ENCODE measurements at regions of chr16 and their contacts with region 1.

Region 1: DNA sequence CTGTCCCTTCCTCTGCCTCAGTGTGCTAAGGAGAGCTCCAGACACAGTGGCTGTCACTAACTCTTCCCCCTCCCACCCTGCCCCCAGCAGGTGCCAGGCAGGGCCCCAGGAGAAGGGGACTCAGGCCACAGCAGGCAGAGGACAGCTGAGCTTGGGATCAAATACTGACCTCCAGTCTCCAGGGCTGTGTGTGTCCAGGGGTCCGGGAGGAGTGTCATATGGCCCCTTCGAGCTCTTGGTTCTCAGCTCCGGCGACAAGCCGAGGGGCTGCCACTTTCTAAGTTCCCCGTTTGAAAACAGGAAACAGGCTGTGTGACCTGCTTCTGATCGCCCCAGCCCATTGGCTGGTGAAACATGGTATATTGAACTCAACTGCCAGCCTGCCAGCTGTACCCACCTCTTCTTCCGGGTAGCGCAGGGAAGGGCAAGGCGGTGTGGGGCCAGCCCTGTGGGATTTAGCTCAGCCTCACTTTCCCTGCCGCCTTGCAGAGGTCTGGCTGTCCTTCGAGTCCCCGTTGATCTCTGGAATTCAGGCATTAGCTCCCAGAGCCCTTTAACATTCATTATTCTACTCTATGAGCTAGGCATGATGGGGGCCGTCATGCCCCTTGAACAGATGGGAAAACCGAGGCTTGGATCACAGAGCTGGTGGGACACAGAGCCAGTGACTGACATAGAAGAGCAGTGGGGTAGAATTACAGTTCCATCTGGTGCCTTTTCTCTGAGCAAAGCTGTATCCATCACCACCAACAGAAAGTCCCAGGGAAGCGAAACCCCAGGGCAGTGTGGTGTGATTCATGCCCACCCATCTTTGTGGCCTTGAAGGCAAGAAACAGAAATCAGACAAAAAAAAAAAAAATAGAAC is at the start of gene SNX20:
- DNase-seq: peak in 13 of 14 experiments; percentile 57 to 90 (median 69)
- ATAC-seq: peak; percentile 82
- H3K4me3 ChIP-seq: peak within 1 kb of the TSS; percentile 96
- H3K4me3 Mint-ChIP-seq: peak within 1 kb of the TSS; percentile 97
- H3K27ac ChIP-seq: peak within 1 kb of the TSS; percentile 87 to 92
- H3K27ac Mint-ChIP-seq: peak within 1 kb of the TSS; percentile 84
- H3K4me1 ChIP-seq: peaks cover 91% of the 10 kb centered on the region
- H3K4me1 Mint-ChIP-seq: peaks cover 93% of the 10 kb centered on the region
- H3K27me3 ChIP-seq: no peaks in the 10 kb centered on the region
- H3K27me3 Mint-ChIP-seq: no peaks in the 10 kb centered on the region
- CTCF ChIP-seq: no peak
- total RNA-seq, gene SNX20: 26.6 TPM

Region 2: DNA sequence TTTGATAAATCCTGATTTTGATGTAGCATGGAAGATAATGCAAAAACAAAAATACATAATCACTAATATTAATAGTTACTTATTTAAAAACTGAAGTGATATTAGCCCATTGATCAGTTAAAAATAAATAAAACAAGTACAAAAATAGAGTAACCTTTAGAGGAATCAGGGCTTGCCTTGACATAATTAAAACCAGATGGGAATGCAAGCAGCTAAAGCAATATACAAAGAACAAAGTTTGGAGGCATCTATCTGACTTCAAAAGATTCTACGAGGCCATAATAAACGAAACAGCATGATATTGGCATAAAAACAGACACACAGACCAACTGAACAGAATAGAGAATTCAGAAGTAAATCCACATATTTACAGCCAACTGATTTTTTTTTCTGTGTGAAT is 630.5 kb before region 1 on chr16:
- CTCF ChIA-PET with region 1: no interaction called
- POLR2A ChIA-PET with region 1: no interaction called
- intact Hi-C with region 1: no loop called
- DNase-seq: no peak
- ATAC-seq: no peak
- H3K4me3 ChIP-seq: no peak overlapping the region
- H3K4me3 Mint-ChIP-seq: no peak overlapping the region
- H3K27ac ChIP-seq: no peak overlapping the region
- H3K27ac Mint-ChIP-seq: no peak overlapping the region
- H3K4me1 ChIP-seq: no peaks in the 10 kb centered on the region
- H3K4me1 Mint-ChIP-seq: no peaks in the 10 kb centered on the region
- H3K27me3 ChIP-seq: peaks cover 0 to 3% of the 10 kb centered on the region in 2 experiments
- H3K27me3 Mint-ChIP-seq: peaks cover 22% of the 10 kb centered on the region
- CTCF ChIP-seq: no peak

Region 3: GRCh38 chr16:50473356-50473945 is 207.8 kb before region 1 on chr16:
- CTCF ChIA-PET with region 1: no interaction called
- POLR2A ChIA-PET with region 1: no interaction called
- intact Hi-C with region 1: no loop called
- DNase-seq: peak in 1 of 14 experiments; percentile 28
- ATAC-seq: no peak
- H3K4me3 ChIP-seq: no peak overlapping the region
- H3K4me3 Mint-ChIP-seq: no peak overlapping the region
- H3K27ac ChIP-seq: no peak overlapping the region
- H3K27ac Mint-ChIP-seq: no peak overlapping the region
- H3K4me1 ChIP-seq: peaks cover 1% of the 10 kb centered on the region
- H3K4me1 Mint-ChIP-seq: no peaks in the 10 kb centered on the region
- H3K27me3 ChIP-seq: peaks cover 10 to 11% of the 10 kb centered on the region in 2 experiments
- H3K27me3 Mint-ChIP-seq: peaks cover 8% of the 10 kb centered on the region
- CTCF ChIP-seq: no peak

Region 4: DNA sequence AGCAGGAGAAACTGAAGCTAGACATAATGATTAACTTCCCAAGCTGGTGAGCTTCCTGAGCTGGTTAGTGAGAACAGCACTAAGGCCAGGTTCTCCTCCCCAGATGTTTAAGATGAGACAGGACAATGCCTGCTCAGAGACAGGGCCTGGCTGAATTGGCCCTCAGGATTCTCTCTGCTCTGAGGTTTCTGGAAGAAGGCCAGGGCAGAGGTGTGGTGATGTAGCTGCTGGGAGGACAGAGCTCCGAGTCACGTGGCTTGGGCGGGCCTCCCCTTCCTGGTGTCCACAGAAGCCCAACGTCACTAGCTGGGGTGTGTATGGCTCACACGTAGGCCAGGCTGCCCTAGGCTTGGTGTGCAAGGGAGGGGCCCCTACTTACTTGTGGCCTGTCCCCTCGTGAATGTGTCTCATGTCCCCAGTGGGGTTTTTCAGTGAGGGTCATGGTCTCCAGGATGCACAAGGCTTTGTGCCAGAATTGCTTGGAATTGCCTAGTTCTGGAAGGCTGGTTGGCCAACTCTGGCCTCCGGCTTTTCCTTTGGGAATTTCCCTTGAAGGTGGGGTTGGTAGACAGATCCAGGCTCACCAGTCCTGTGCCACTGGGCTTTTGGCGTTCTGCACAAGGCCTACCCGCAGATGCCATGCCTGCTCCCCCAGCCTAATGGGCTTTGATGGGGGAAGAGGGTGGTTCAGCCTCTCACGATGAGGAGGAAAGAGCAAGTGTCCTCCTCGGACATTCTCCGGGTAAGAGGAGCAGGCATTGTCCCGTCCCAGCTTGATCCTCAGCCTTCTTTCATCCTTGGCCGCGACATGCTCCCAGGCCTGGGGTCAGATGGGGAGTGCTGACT is 15.5 kb after region 1 on chr16:
- CTCF ChIA-PET with region 1: interaction called, 4 read pairs
- POLR2A ChIA-PET with region 1: interaction called, 20 read pairs
- intact Hi-C with region 1: loop called in 1 of 2 experiments (anchors 2 kb)
- DNase-seq: peak in 10 of 14 experiments; percentile 40 to 91 (median 56)
- ATAC-seq: peak; percentile 66
- H3K4me3 ChIP-seq: peak overlapping the region; percentile 58
- H3K4me3 Mint-ChIP-seq: peak overlapping the region; percentile 86
- H3K27ac ChIP-seq: peak overlapping the region; percentile 8 to 85
- H3K27ac Mint-ChIP-seq: peak overlapping the region; percentile 87
- H3K4me1 ChIP-seq: peaks cover 77% of the 10 kb centered on the region
- H3K4me1 Mint-ChIP-seq: peaks cover 75% of the 10 kb centered on the region
- H3K27me3 ChIP-seq: no peaks in the 10 kb centered on the region
- H3K27me3 Mint-ChIP-seq: no peaks in the 10 kb centered on the region
- CTCF ChIP-seq: no peak

Region 5: DNA sequence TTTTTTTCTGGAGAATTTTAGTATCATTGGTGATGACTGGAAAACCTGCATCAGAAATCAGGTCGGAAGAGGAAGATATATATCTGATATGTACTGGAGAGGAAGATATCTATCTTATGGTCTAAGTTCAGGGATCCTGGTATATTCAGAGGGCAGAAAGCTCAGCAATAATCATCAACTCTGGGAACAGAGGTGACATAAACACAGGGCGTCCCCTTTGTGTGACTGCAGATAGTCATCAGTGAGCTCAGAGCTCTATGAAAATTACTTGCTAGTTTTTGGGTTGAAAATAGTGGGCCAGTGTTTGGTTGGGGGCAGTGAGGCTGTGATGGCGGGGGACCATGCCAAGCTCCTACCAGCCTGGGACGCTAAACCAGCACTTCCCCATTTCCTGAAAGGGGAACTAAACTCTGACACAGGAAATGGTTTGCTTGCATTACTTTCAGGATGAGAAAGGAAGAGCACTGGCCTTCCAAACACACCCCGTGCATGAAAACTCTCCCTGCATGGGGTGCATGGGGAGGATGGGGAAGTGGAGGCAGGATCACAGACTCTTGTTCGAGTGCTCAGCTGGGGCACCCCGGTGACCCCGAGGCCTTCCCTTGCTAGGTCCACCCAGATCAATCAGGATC is 27.9 kb after region 1 on chr16:
- CTCF ChIA-PET with region 1: interaction called, 3 read pairs
- POLR2A ChIA-PET with region 1: interaction called, 7 read pairs
- intact Hi-C with region 1: loop called in 1 of 2 experiments (anchors 2 kb)
- DNase-seq: peak in 3 of 14 experiments; percentile 35 to 55 (median 52)
- ATAC-seq: no peak
- H3K4me3 ChIP-seq: no peak overlapping the region
- H3K4me3 Mint-ChIP-seq: no peak overlapping the region
- H3K27ac ChIP-seq: peak overlapping the region in 1 of 2 donors; percentile 52
- H3K27ac Mint-ChIP-seq: peak overlapping the region; percentile 71
- H3K4me1 ChIP-seq: peaks cover 41% of the 10 kb centered on the region
- H3K4me1 Mint-ChIP-seq: peaks cover 50% of the 10 kb centered on the region
- H3K27me3 ChIP-seq: no peaks in the 10 kb centered on the region
- H3K27me3 Mint-ChIP-seq: no peaks in the 10 kb centered on the region
- CTCF ChIP-seq: no peak

Region 6: GRCh38 chr16:50735629-50736122 is 54.4 kb after region 1 on chr16:
- CTCF ChIA-PET with region 1: no interaction called
- POLR2A ChIA-PET with region 1: interaction called, 13 read pairs
- intact Hi-C with region 1: no loop called
- DNase-seq: no peak
- ATAC-seq: no peak
- H3K4me3 ChIP-seq: no peak overlapping the region
- H3K4me3 Mint-ChIP-seq: no peak overlapping the region
- H3K27ac ChIP-seq: no peak overlapping the region
- H3K27ac Mint-ChIP-seq: no peak overlapping the region
- H3K4me1 ChIP-seq: peaks cover 14% of the 10 kb centered on the region
- H3K4me1 Mint-ChIP-seq: peaks cover 20% of the 10 kb centered on the region
- H3K27me3 ChIP-seq: no peaks in the 10 kb centered on the region
- H3K27me3 Mint-ChIP-seq: no peaks in the 10 kb centered on the region
- CTCF ChIP-seq: no peak

Measured in CD4-positive, alpha-beta T cell (primary cell).